ENCODE measurements at regions of chr6 and their contacts with region 1.

Region 1: GRCh38 chr6:20589266-20589665 is 55.0 kb downstream of the CDKAL1 start:
- DNase-seq: peak; percentile 57
- ATAC-seq: peak; percentile 67
- H3K4me3 ChIP-seq: no peak overlapping the region
- H3K27ac ChIP-seq: 0 out of 2 replicates have a peak overlapping the region, but pooled peaks have one; percentile 2
- H3K4me1 ChIP-seq: peaks cover 10% of the 10 kb centered on the region; the same call in 1 of the 2 replicates
- H3K27me3 ChIP-seq: no peaks in the 10 kb centered on the region
- CTCF ChIP-seq: no peak

Region 2: DNA sequence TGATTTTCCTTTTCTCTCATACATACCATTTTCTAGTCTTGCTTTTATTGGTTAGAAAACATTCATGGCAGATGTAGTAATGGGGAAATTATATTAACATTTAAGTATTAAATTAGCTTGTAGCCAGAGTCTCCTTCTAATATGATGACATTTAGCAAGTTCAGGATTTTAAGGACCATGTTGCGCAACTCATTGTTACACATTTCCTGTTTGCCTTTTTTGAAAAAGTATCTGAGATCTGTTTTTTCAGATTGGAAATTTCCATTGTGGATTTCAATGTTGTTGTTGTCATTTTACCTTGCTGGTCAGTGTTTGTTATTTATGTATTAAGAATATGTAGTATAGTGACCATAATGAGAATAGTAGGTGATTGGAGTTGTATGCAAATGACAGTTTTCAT is 16.3 kb before region 1 on chr6:
- CTCF ChIA-PET with region 1: no interaction called
- POLR2A ChIA-PET with region 1: no interaction called
- intact Hi-C with region 1: no loop called
- DNase-seq: peak; percentile 37
- ATAC-seq: no peak
- H3K4me3 ChIP-seq: no peak overlapping the region
- H3K27ac ChIP-seq: no peak overlapping the region
- H3K4me1 ChIP-seq: peaks cover 14% of the 10 kb centered on the region
- H3K27me3 ChIP-seq: no peaks in the 10 kb centered on the region
- CTCF ChIP-seq: no peak

Region 3: GRCh38 chr6:20669571-20670314 is 80.5 kb after region 1 on chr6:
- CTCF ChIA-PET with region 1: no interaction called
- POLR2A ChIA-PET with region 1: no interaction called
- intact Hi-C with region 1: no loop called
- DNase-seq: no peak
- ATAC-seq: no peak
- H3K4me3 ChIP-seq: no peak overlapping the region
- H3K27ac ChIP-seq: no peak overlapping the region
- H3K4me1 ChIP-seq: no peaks in the 10 kb centered on the region
- H3K27me3 ChIP-seq: no peaks in the 10 kb centered on the region
- CTCF ChIP-seq: no peak

Region 4: GRCh38 chr6:20757761-20758160 is 168.5 kb after region 1 on chr6:
- CTCF ChIA-PET with region 1: no interaction called
- POLR2A ChIA-PET with region 1: no interaction called
- intact Hi-C with region 1: loop called (anchors 10 kb)
- DNase-seq: peak; percentile 61
- ATAC-seq: peak; percentile 71
- H3K4me3 ChIP-seq: no peak overlapping the region
- H3K27ac ChIP-seq: peak overlapping the region; percentile 26; the same call in 1 of the 2 replicates
- H3K4me1 ChIP-seq: peaks cover 24% of the 10 kb centered on the region
- H3K27me3 ChIP-seq: no peaks in the 10 kb centered on the region
- CTCF ChIP-seq: no peak

Measured in PC-3 (cell line).